ENCODE measurements at regions of chr2 and their contacts with region 1.

Region 1: DNA sequence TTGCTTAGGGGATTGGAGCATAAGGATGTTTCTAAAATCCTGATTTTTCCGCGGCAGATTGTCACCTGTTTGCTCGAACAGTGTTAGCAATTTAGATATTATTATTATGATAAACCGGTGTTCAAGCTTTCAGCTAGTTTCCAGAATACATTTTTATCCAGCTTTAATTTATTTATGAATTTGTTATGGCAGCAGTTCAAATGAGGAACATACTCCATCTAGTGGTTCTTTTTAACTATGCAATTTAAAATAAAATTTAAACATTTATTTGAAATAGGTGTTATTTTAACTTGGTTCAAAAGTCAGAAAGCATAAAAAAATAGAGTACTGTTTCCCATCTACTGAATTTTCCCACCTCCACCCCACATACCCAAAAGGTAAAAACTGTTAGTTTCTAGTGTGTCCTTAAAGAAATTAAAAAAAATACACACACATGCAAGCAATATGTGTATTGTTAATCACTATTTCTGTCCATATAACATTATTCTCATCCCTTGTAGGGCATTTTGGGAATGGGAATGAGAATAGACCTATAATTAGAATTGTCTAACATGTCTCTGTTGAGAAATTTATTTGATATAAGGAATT is 23.2 kb downstream of the ACOXL start:
- DNase-seq: peak; percentile 38
- CTCF ChIP-seq: peak; percentile 41

Region 2: DNA sequence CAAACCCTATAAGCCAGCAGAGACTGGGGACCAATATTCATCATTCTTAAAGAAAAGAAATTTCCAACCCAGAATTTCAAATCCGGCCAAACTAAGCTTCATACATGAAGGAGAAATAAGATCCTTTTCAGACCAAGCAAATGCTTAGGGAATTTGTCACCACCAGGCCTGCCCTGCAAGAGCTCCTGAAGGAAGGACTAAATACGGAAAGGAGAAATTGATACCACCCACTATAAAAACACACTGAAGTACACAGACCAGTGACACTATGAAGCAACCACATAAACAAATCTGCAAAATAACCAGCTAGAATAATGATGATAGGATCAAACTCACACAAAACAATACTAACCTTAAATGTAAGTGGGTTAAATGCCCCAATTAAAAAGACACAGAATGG is 573.1 kb before region 1 on chr2:
- CTCF ChIA-PET with region 1: no interaction called
- POLR2A ChIA-PET with region 1: no interaction called
- DNase-seq: no peak
- CTCF ChIP-seq: no peak

Region 3: DNA sequence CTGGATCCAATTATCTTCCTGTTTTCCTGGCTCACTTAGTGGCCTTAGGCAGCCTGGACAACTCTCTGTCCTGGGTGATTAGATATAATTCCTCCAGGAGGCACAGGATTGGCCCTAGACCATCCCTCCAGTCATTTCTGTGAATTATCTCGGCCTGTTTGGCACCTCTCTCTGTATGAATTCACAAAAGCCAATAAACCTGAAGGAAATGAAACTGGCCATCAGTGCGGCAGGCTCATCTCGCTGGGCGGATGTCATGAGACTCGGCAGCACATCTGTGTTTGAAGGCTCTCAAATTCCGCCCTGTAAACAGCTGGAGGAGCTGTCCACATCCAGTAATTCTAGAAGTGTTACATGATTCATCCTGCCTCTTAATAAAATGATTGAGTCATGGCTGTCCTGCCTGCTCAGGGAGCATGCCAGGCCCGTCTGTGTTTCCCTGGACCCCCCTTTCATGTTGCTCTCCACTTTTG is 15.4 kb after region 1 on chr2:
- CTCF ChIA-PET with region 1: interaction called, 40 read pairs
- POLR2A ChIA-PET with region 1: no interaction called
- DNase-seq: no peak
- CTCF ChIP-seq: no peak

Region 4: GRCh38 chr2:110800611-110801402 is 45.2 kb after region 1 on chr2:
- CTCF ChIA-PET with region 1: no interaction called
- POLR2A ChIA-PET with region 1: no interaction called
- DNase-seq: no peak
- CTCF ChIP-seq: no peak

Region 5: GRCh38 chr2:110874453-110875383 is 119.1 kb after region 1 on chr2:
- CTCF ChIA-PET with region 1: no interaction called
- POLR2A ChIA-PET with region 1: no interaction called
- DNase-seq: peak; percentile 62
- CTCF ChIP-seq: peak; percentile 13